Natural killer cell (primary cell): ENCODE measurements at regions of chr3 and their contacts with region 1.

Region 1: DNA sequence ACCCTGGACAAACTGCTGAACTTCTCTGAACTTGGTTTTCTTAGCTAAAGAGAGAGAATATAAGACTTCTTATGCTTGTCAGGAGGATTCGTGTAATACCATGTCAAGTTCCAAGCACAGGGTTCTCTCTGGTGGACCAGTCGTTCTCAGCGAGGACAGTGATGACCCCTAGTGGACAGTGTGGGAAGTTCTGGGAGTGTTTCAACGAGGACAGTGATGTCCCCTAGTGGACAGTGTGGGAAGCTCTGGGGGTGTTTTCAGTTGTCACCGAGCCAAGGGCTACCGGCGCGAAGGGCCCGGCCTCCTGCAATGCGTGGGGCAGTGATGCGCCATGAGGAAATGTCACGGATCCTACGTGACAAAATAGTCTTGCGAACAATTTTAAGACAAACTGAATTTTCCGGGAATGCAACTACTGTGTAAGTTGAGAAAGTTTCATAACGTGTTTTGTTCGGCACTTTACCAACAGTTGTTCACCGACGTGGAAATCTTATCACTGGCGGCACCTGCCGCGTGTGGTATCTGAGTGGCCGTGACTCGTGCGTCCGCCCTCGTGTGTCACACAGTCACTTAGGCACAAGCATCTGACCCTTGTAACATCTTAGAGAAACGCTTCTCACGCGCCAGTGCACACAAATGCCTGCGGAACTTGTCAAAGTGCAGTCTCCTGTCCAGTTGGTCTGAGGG is 39.3 kb upstream of the MUC4 start:
- DNase-seq: peak; percentile 82 to 96
- ATAC-seq: peak; percentile 99 to 100 (median 100)
- H3K4me3 ChIP-seq: no peak overlapping the region
- H3K4me3 Mint-ChIP-seq: peak overlapping the region; percentile 8
- H3K27ac ChIP-seq: no peak overlapping the region
- H3K27ac Mint-ChIP-seq: no peak overlapping the region
- H3K4me1 ChIP-seq: peaks cover 6% of the 10 kb centered on the region
- H3K4me1 Mint-ChIP-seq: peaks cover 8 to 9% of the 10 kb centered on the region in 2 donors
- H3K27me3 ChIP-seq: no peaks in the 10 kb centered on the region
- H3K27me3 Mint-ChIP-seq: peaks cover 3 to 7% of the 10 kb centered on the region in 2 donors
- CTCF ChIP-seq: peak; percentile 100

Region 2: DNA sequence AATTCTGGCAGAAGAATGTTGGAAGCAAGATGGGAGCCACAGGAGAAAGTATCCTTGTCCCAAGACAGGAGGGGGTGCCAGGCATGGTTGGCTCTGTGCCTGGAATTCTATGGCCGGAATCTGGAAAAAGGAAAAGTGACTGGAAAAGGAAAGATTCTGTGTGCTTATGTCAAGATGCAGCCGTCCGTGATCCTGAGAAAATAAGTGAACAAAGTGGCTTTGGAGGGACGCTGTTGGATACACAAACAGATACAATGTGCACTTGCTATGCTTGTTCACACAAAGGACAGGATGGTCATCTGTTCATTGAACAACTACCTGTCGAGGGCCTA is 158.7 kb before region 1 on chr3:
- intact Hi-C with region 1: no loop called
- DNase-seq: no peak
- ATAC-seq: no peak
- H3K4me3 ChIP-seq: no peak overlapping the region
- H3K4me3 Mint-ChIP-seq: no peak overlapping the region
- H3K27ac ChIP-seq: no peak overlapping the region
- H3K27ac Mint-ChIP-seq: peak overlapping the region in 1 of 2 donors; percentile 1
- H3K4me1 ChIP-seq: no peaks in the 10 kb centered on the region
- H3K4me1 Mint-ChIP-seq: peaks cover 4 to 5% of the 10 kb centered on the region in 2 donors
- H3K27me3 ChIP-seq: no peaks in the 10 kb centered on the region
- H3K27me3 Mint-ChIP-seq: no peaks in the 10 kb centered on the region
- CTCF ChIP-seq: no peak

Region 3: DNA sequence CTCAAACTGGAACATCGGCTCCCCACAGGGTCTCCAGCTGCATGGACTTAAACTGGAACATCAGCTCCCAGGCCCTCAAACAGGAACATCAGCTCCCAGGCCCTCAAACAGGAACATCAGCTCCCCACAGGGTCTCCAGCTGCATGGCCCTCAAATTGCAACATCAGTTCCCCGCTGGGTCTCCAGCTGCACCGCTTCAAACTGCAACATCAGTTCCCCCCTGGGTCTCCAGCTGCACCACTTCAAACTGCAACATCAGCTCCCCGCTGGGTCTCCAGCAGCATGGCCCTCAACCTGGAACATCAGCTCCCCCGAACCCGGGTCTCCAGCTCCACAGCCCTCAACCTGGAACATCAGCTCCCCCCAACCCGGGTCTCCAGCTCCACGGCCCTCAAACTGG is 148.9 kb after region 1 on chr3:
- intact Hi-C with region 1: loop called (anchors 5 kb)
- DNase-seq: no peak
- ATAC-seq: no peak
- H3K4me3 ChIP-seq: no peak overlapping the region
- H3K4me3 Mint-ChIP-seq: no peak overlapping the region
- H3K27ac ChIP-seq: no peak overlapping the region
- H3K27ac Mint-ChIP-seq: no peak overlapping the region
- H3K4me1 ChIP-seq: no peaks in the 10 kb centered on the region
- H3K4me1 Mint-ChIP-seq: no peaks in the 10 kb centered on the region
- H3K27me3 ChIP-seq: no peaks in the 10 kb centered on the region
- H3K27me3 Mint-ChIP-seq: peaks cover 0 to 10% of the 10 kb centered on the region in 2 donors
- CTCF ChIP-seq: no peak